ENCODE measurements at regions of chr19 and their contacts with region 1.

Region 1: DNA sequence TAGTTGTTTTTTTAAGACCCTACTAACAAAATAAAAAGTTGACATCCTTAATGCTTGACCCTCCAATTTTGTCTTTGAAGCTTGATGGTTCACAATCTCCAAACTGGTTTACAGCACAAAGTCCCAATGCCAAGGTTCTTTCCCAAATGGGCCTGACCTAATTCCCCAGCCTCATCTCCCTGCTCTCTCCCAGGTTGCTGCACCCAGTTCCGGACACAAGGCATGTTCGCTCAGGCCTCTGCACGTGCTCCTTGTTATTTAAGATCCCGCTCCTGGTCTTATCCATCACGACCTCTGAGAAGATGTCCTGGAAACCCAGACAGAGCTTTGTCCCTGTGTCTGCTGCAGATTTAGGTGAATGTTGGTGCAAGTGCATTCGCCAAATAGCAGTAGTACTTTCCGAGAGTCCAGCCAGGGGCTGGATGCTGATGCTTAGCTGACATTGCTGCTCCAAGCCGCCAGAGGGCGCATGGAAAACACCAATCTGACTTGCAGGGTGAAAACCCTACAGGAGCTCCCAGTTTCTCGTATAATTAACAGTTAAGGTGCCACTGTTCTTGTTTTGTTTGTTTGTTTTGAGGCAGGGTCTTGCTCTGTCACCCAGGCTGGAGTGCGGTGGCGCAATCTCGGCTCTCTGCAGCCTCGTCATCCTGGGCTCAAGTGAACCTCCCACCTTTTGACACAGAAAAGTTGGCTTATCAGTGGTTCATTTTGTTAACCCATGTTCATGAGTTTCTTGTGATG is 18.5 kb downstream of the LYPD3 start:
- DNase-seq: peak; percentile 67 to 88
- ATAC-seq: peak; percentile 73 to 91 (median 80)
- H3K4me3 ChIP-seq: no peak overlapping the region
- H3K27ac ChIP-seq: no peak overlapping the region
- H3K4me1 ChIP-seq: no peaks in the 10 kb centered on the region
- H3K27me3 ChIP-seq: no peaks in the 10 kb centered on the region
- CTCF ChIP-seq: peak; percentile 97

Region 2: GRCh38 chr19:43354305-43354627 is 92.7 kb before region 1 on chr19:
- intact Hi-C with region 1: no loop called
- DNase-seq: no peak
- ATAC-seq: no peak
- H3K4me3 ChIP-seq: no peak overlapping the region
- H3K27ac ChIP-seq: no peak overlapping the region
- H3K4me1 ChIP-seq: no peaks in the 10 kb centered on the region
- H3K27me3 ChIP-seq: peaks cover 2 to 9% (median 3%) of the 10 kb centered on the region in 3 donors
- CTCF ChIP-seq: no peak

Region 3: GRCh38 chr19:43519436-43520088 is 72.6 kb after region 1 on chr19:
- intact Hi-C with region 1: loop called (anchors 1 kb)
- DNase-seq: peak; percentile 72 to 87
- ATAC-seq: peak; percentile 85 to 92 (median 92)
- H3K4me3 ChIP-seq: no peak overlapping the region
- H3K27ac ChIP-seq: no peak overlapping the region
- H3K4me1 ChIP-seq: no peaks in the 10 kb centered on the region
- H3K27me3 ChIP-seq: no peaks in the 10 kb centered on the region
- CTCF ChIP-seq: peak; percentile 94